ENCODE measurements at regions of chr2 and their contacts with region 1.

Region 1: GRCh38 chr2:201257956-201258665 is 2.2 kb upstream of the CASP8 start:
- DNase-seq: peak; percentile 98
- H3K4me3 Mint-ChIP-seq: peak overlapping the region; percentile 78
- H3K27ac Mint-ChIP-seq: peak overlapping the region; percentile 97
- H3K4me1 Mint-ChIP-seq: peaks cover 71% of the 10 kb centered on the region
- H3K27me3 Mint-ChIP-seq: no peaks in the 10 kb centered on the region

Region 2: DNA sequence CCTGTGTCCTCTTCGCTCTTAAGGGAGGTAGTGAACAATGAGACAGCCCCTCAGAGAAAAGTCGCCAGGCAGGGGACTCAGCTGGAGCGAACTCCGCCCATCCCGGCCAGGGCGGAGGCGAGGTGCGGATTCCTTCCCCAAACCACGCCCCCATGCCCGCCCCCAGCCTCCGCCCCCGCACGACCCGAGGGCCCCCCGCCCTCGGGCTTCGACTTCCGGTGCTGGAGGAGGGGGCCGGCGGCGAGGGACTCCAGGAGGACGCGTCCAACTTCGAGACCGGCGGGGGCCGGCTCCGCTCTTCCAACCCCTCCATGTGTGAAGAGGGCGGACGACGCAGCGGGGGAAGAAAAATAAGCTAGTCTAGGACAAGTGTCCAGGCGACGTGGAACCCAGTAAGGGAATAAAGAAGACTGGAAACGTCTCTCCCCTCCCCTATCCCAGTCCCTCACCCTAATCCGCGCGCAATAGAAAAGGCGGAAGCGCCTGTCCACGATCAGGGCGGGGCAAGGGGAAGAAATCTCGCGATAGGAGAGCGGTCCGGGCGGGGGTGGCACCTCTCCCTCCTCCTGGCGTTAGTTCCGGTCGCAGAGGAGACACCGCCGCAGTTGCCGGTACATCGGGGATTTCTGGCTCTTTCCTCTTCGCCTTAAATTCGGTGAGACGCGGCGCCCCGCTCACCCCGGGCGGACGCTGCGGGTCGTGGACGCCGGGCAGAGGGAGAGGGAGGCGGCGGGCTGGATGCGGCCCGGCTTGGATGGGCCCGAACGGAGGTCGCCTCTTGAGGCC is 446.6 kb before region 1 on chr2 and contains the start of gene BZW1:
- CTCF ChIA-PET with region 1: no interaction called
- intact Hi-C with region 1: loop called (anchors 2 kb)
- DNase-seq: peak; percentile 99
- H3K4me3 Mint-ChIP-seq: peak within 1 kb of the TSS; percentile 99
- H3K27ac Mint-ChIP-seq: peak within 1 kb of the TSS; percentile 100
- H3K4me1 Mint-ChIP-seq: peaks cover 46% of the 10 kb centered on the region
- H3K27me3 Mint-ChIP-seq: no peaks in the 10 kb centered on the region
- total RNA-seq, gene BZW1: 423 to 442 TPM

Region 3: DNA sequence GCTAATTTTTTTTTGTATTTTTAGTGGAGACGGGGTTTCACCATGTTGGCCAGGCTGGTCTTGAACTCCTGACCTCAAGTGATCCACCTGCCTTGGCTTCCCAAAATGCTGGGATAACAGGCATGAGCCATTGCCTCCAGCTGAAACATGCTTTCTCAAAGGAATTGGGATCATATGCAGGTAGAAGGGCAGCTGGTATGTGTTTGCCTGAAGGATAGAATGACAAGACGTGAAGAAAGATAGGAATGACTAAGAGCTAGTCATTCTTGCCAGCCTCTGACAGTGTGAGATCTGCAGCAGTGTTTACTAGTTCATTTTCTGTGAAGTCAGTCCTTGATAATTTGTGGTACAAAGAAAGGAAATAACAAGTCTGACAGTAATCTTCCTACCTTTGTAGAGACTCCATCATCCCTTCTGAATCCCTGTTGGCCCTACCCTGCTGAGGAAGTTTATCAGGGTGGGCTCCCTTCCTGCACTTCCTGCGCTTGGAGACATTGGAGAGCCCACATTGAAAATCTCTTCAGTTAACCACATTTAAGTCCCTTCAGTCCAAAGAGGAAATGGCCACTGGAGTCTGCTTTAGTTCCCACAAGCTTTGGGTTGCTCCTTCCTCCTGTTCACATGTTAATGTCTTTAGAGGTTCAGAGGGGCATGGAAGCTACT is 127.5 kb before region 1 on chr2:
- CTCF ChIA-PET with region 1: interaction called, 3 read pairs
- intact Hi-C with region 1: loop called (anchors 1 kb)
- DNase-seq: peak; percentile 68
- H3K4me3 Mint-ChIP-seq: peak overlapping the region; percentile 76
- H3K27ac Mint-ChIP-seq: peak overlapping the region; percentile 96
- H3K4me1 Mint-ChIP-seq: peaks cover 56% of the 10 kb centered on the region
- H3K27me3 Mint-ChIP-seq: no peaks in the 10 kb centered on the region

Region 4: DNA sequence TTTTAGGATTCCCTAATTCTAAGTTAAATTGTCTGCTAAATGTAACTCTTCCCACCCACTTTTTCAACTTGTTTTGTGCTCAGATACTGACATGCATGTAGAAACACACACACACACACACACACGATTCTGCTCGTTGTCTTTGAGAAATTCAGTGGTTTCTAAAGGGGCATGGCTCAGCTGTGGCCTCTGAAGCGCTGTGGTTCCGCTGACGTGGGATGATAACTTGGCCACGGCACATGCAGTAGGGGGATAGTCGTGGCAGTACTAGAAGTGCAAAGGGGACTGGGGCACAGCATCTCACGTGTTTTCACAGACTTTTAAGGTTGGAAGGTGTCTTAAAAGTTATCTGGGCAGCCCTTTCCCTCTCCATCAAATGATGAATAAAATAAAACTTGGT is 56.7 kb before region 1 on chr2:
- CTCF ChIA-PET with region 1: no interaction called
- intact Hi-C with region 1: no loop called
- DNase-seq: no peak
- H3K4me3 Mint-ChIP-seq: no peak overlapping the region
- H3K27ac Mint-ChIP-seq: no peak overlapping the region
- H3K4me1 Mint-ChIP-seq: peaks cover 39% of the 10 kb centered on the region
- H3K27me3 Mint-ChIP-seq: no peaks in the 10 kb centered on the region

Region 5: GRCh38 chr2:201244829-201245228 is 13.3 kb before region 1 on chr2:
- CTCF ChIA-PET with region 1: no interaction called
- intact Hi-C with region 1: no loop called
- DNase-seq: no peak
- H3K4me3 Mint-ChIP-seq: no peak overlapping the region
- H3K27ac Mint-ChIP-seq: no peak overlapping the region
- H3K4me1 Mint-ChIP-seq: peaks cover 42% of the 10 kb centered on the region
- H3K27me3 Mint-ChIP-seq: no peaks in the 10 kb centered on the region

Region 6: DNA sequence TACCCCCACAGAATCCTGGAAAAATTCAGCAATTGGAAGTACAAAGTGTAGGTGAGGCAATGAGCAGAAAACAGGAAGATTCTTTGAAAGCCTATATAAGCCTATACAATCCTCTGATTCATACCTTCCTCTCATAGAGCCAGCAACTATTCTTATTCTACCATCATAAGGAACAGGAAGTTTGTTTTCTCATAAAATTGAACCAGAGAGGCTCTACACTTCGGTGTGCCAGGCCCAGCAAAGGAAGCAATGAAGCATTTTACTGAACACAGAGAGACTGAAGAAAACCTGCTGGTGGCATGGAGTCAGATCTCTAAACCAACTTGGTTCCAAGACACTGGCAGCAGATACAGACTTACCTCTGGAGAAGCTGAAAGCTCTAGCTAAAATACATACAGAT is 21.0 kb after region 1 on chr2:
- CTCF ChIA-PET with region 1: interaction called, 6 read pairs
- intact Hi-C with region 1: loop called (anchors 2 kb)
- DNase-seq: peak; percentile 37
- H3K4me3 Mint-ChIP-seq: no peak overlapping the region
- H3K27ac Mint-ChIP-seq: peak overlapping the region; percentile 73
- H3K4me1 Mint-ChIP-seq: peaks cover 18% of the 10 kb centered on the region
- H3K27me3 Mint-ChIP-seq: no peaks in the 10 kb centered on the region

Region 7: DNA sequence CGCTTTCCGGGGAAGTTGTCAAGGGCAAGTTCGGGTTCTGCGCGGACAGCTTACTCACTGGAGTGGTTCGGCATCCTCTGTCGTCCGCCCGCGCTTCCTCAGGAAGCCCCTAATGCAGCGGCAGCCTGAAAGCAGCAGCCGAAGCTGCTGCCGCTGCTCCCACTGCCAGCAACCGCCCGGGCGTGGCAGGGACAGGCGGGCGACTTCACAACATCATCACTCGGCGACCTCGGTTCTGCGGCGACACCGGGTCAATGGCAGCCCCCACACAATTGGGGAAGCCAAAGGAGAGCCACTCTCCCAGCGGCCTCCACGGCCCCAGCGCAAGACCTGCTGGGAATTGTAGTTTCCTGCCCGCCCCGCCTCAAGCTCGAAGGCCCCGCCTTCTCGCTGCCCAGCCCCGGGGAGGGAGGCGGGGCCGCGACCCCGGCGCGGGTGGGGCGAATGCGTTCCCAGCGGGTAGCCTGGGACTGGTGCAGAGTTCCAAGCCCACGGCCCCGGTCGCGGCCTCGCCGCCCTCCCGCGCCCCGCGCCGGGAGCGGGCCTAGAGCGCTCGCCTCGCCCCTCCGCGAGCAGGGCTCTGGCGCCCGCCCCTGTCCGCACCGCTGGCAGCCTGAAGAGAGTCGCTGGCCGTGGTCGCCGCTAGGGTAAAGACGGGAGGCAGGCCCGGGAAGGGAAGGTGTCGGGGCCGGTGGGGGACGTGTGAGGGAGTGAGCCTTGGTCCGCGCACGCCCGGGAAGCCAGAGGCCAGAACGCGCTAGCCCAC is 193.4 kb after region 1 on chr2 and contains the starts of genes STRADB and TRAK2:
- CTCF ChIA-PET with region 1: no interaction called
- intact Hi-C with region 1: loop called (anchors 1 kb)
- DNase-seq: peak; percentile 96
- H3K4me3 Mint-ChIP-seq: peak within 1 kb of the TSS; percentile 95
- H3K27ac Mint-ChIP-seq: peak within 1 kb of the TSS; percentile 94
- H3K4me1 Mint-ChIP-seq: peaks cover 51% of the 10 kb centered on the region
- H3K27me3 Mint-ChIP-seq: no peaks in the 10 kb centered on the region
- total RNA-seq, gene STRADB: 17.6 to 19.1 TPM
- total RNA-seq, gene TRAK2: 10.4 TPM

Region 8: GRCh38 chr2:202115479-202115971 is 857.4 kb after region 1 on chr2:
- CTCF ChIA-PET with region 1: no interaction called
- intact Hi-C with region 1: no loop called
- DNase-seq: no peak
- H3K4me3 Mint-ChIP-seq: no peak overlapping the region
- H3K27ac Mint-ChIP-seq: no peak overlapping the region
- H3K4me1 Mint-ChIP-seq: no peaks in the 10 kb centered on the region
- H3K27me3 Mint-ChIP-seq: peaks cover 14% of the 10 kb centered on the region

Region 9: DNA sequence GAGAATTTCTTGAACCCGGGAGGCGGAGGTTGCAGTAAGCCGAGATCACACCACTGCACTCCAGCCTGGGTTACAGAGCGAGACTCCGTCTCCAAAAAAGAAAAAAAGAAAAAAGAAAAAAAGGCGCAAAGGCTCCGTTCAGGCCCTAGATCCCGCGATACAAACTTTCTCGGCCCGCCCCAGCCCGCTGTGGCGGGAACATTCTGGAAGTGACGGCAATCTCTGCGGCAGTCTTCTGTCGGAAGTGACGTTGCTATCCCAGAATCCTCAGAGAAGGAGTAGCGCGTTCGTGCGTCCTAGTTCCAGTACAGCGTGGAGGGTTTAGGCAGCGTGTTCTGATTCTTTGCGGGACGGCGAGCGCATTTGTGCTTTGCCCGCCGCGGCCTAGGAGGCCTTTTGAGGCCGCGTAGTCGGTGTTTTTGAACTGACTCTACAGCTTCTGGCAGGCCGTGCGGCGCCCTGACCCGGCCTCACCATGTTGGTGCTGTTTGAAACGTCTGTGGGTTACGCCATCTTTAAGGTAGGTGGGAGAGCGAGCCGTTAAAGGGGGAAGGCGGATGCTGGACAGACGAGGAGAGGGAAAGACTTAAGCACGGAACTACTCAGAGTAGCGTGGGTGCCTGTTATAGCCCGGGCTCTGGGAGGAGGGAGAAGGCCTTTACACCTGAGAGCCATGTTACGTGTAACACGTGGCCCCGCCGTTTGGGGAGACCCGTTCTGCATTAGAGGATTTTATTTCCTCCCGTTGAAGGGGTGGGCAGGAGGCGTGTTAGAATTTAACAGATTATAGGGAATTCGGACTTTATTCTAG is 1007.6 kb after region 1 on chr2 and contains the start of gene NOP58:
- CTCF ChIA-PET with region 1: no interaction called
- intact Hi-C with region 1: loop called (anchors 2 kb)
- DNase-seq: peak; percentile 96
- H3K4me3 Mint-ChIP-seq: no peak within 1 kb of the TSS
- H3K27ac Mint-ChIP-seq: no peak within 1 kb of the TSS
- H3K4me1 Mint-ChIP-seq: peaks cover 22% of the 10 kb centered on the region
- H3K27me3 Mint-ChIP-seq: no peaks in the 10 kb centered on the region
- total RNA-seq, gene NOP58: 118 to 123 TPM

Measured in activated naive CD4-positive, alpha-beta T cell treated with anti-CD3 and anti-CD28 coated beads for 36 hours (primary cell).